H1 (cell line): ENCODE measurements at regions of chr5 and their contacts with region 1.

Region 1: DNA sequence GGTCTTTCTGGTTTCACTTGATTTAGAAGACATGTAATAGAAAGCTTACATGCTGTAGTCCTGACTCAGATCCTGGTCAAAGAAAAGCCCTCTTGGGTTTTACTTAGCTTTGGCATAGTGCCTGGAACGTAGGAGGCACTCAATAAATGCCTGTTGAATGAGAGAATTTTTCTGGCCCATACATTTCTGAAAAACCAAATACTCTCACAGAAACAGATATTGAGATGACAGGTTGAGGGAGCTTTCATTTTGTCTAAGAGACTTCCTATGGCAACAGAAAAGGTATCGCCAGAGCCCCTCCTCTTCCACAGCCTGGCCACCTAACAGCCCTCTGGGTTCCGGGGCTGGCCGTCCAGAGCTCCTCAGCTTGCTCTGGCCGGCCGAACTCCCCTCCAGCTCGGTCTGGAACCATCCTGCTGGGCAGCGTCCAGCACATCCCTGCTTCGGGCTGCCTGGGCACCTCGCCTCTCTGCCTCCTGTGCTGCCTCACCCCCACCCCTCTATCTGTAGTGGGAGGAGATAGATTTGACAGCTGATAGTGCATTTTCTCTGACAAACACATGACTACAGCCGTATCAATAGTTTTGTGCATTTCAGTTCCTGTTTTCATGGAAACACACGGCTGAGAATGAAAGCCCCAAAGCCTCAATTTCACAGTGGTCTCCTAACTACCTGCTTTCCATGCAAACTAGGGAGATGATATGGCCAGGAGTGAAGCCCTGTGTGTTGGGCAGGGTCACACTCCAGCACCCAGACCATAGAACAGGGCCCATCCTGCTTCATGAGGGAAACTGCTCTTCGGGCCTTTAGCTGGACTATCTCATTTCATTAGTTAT is 1.1 kb downstream of the IL4 start:
- DNase-seq: no peak
- H3K4me3 ChIP-seq: no peak overlapping the region
- H3K27ac ChIP-seq: no peak overlapping the region
- H3K4me1 ChIP-seq: no peaks in the 10 kb centered on the region
- H3K27me3 ChIP-seq: no peaks in the 10 kb centered on the region
- CTCF ChIP-seq: no peak
- EP300 ChIP-seq: no peak
- POLR2A ChIP-seq: no peak
- RAD21 ChIP-seq: no peak

Region 2: DNA sequence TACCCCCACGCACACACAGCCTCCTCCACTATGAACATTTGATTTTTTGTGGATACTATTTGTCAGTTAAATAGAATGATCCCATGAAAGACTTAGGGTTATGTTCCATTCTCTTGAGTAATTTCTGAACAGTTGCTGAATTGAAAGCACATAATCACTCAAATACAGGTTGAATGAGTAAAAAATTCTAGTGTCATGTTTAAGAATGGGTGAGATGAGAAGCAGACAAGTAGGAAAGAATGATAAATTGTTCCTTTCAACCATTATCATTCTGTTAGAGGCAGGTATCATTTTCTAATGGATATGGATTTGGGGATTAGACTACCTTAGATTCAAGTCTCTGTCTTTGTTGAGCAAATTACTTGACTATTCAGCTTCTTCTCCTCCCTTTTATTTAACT is 98.8 kb before region 1 on chr5:
- CTCF ChIA-PET with region 1: no interaction called
- POLR2A ChIA-PET with region 1: no interaction called
- DNase-seq: no peak
- H3K4me3 ChIP-seq: no peak overlapping the region
- H3K27ac ChIP-seq: no peak overlapping the region
- H3K4me1 ChIP-seq: no peaks in the 10 kb centered on the region
- H3K27me3 ChIP-seq: no peaks in the 10 kb centered on the region
- CTCF ChIP-seq: no peak
- EP300 ChIP-seq: no peak
- POLR2A ChIP-seq: no peak
- RAD21 ChIP-seq: no peak

Region 3: DNA sequence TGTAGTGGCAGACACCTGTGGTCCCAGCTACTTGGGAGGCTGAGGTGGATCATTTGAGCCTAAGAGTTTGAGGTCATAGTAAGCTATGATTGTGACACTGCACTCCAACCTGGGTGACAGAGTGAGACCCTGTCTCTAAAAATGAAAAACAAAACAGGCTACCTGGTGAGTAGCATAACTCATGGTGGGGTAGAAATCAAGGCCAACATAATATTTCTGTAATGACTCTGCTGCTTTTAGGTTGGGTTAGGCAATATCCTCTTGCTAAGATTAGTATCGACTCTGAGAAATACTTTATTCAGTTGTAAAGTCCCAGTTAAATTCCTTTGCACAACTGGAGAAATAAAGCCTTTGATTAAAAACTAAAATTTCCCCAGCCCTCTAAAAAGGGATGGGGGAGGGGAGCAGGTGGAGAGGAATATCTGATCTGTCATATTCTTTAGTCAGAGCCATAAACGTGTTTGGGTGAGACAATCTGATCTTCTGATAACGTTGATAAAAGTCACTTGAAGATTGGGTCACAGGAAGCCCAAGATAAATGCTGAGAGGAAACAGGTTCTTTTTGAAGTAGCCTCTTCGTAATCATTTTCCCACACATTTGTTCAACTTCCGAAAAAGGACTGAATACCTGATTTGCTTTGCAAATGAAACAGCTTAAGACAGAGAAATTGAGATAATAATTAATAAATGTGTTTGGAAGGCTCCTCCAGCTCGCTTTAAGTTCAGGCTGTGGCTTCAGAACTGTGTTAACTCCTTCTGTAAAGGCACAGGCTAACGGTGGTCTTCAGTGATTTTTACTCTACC is 13.8 kb after region 1 on chr5:
- CTCF ChIA-PET with region 1: interaction called, 18 read pairs
- POLR2A ChIA-PET with region 1: interaction called, 5 read pairs
- DNase-seq: no peak
- H3K4me3 ChIP-seq: no peak overlapping the region
- H3K27ac ChIP-seq: no peak overlapping the region
- H3K4me1 ChIP-seq: no peaks in the 10 kb centered on the region
- H3K27me3 ChIP-seq: no peaks in the 10 kb centered on the region
- CTCF ChIP-seq: no peak
- EP300 ChIP-seq: no peak
- POLR2A ChIP-seq: no peak
- RAD21 ChIP-seq: no peak